Activated naive CD4-positive, alpha-beta T cell treated with anti-CD3 and anti-CD28 coated beads for 36 hours (primary cell): ENCODE measurements at regions of chr1 and their contacts with region 1.

Region 1: GRCh38 chr1:235697508-235697907 is 47.9 kb upstream of the GNG4 start:
- DNase-seq: peak; percentile 37
- H3K4me3 Mint-ChIP-seq: no peak overlapping the region
- H3K27ac Mint-ChIP-seq: peak overlapping the region; percentile 82
- H3K4me1 Mint-ChIP-seq: peaks cover 18% of the 10 kb centered on the region
- H3K27me3 Mint-ChIP-seq: no peaks in the 10 kb centered on the region

Region 2: DNA sequence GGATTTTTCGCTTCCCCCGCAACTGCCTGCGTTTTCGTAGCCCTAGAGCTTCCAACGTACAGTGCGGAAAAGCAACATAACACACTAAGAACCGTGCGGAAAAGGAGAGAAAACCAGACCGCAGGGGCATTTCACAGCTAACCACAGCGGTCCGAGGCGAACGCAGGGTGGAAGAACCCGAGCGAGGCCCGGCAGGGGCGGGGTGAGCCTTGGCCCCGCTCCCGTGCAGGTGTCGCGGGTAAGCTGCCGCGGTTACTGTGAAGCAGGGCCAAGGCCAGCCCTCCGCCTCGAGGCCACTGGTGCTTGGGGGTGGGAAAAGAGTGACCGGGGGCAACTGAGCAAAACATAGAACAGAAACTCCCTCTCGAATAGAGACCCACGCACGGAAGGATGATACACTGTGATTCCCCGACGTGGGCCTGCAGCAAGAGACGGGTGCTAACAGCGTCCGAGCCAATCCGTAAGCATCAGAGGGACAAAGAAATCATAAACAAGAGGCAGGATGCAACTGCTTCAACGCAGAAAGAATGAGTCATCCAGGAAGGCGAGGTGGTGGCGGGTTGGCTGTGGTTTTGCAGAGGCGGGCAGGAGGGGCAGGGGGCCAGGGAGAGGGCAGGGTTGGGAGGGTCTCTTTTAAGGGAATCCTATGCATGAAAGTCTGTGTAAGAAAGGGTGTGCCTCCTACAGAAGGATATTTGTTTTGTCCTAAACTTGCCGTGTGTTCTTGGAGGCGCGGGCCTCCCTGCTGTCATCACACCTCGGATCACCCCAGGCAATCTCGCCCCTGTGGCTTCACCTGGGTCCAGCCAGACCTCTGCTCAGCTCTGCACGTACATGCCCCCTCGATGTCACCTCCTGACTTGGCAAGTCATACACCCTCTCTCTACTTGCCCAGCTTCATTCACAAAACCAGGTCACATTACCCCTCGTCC is 55.2 kb before region 1 on chr1:
- CTCF ChIA-PET with region 1: no interaction called
- intact Hi-C with region 1: loop called (anchors 1 kb)
- DNase-seq: peak; percentile 84
- H3K4me3 Mint-ChIP-seq: peak overlapping the region; percentile 60
- H3K27ac Mint-ChIP-seq: peak overlapping the region; percentile 61
- H3K4me1 Mint-ChIP-seq: peaks cover 18% of the 10 kb centered on the region
- H3K27me3 Mint-ChIP-seq: peaks cover 30% of the 10 kb centered on the region

Region 3: GRCh38 chr1:235984041-235984825 is 286.7 kb after region 1 on chr1:
- CTCF ChIA-PET with region 1: no interaction called
- intact Hi-C with region 1: no loop called
- DNase-seq: no peak
- H3K4me3 Mint-ChIP-seq: no peak overlapping the region
- H3K27ac Mint-ChIP-seq: no peak overlapping the region
- H3K4me1 Mint-ChIP-seq: no peaks in the 10 kb centered on the region
- H3K27me3 Mint-ChIP-seq: no peaks in the 10 kb centered on the region